ENCODE measurements at regions of chr12 and their contacts with region 1.

Region 1: DNA sequence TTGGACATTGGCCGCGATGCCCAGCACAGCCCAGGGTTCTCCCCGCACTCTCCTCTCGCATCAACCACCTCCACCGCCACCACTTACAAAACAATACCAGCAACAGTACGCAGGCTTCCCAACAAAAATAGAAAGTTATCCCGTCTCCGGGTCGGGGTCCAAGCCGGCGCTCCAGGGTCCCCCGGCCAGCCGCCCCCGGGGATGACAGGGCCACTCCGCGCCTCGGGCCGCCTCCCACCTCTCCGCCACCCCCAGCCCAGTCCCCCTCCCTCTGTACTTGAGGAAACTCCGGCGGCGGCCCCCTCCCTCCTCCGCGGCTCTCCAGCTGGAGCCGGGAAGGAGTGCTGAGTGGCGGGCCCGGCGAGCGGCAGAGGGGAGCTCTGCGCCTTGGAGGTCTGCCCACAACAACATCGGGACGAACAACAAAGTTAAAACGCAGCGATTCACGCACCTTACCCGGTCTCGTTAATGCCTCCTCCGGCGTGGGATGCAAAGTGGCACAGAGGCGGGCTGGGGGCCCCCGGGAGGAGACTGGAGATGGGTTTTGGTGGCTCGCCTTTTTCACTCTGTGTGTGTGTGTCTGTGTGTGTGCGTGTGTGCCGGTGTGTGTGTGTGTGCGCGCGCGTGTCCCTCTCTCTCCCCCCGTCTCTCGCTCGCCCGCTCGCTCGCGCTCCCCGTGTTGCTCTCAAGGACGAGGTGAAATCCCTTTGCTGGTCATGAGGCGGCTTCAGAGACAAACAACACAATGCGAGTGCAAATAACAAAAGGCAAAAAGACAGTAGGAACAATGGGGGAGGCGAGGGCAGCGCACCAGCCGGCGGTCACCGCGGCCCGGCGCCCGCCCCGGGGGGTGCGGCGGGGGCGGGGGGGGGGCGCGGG is 386.8 kb downstream of the BCAT1 start:
- DNase-seq: peak; percentile 84
- H3K4me3 ChIP-seq: peak overlapping the region; percentile 52 to 82 (median 78)
- H3K27ac ChIP-seq: peak overlapping the region; percentile 79 to 85 (median 82)
- H3K4me1 ChIP-seq: peaks cover 0 to 30% (median 21%) of the 10 kb centered on the region in 4 donors
- H3K27me3 ChIP-seq: no peaks in the 10 kb centered on the region
- CTCF ChIP-seq: no peak
- EP300 ChIP-seq: no peak
- POLR2A ChIP-seq: no peak

Region 2: GRCh38 chr12:24414480-24414879 is 147.6 kb before region 1 on chr12:
- intact Hi-C with region 1: no loop called
- DNase-seq: no peak
- H3K4me3 ChIP-seq: no peak overlapping the region
- H3K27ac ChIP-seq: no peak overlapping the region
- H3K4me1 ChIP-seq: no peaks in the 10 kb centered on the region
- H3K27me3 ChIP-seq: no peaks in the 10 kb centered on the region
- CTCF ChIP-seq: no peak
- EP300 ChIP-seq: no peak
- POLR2A ChIP-seq: no peak

Region 3: GRCh38 chr12:24499151-24500146 is 62.7 kb before region 1 on chr12:
- intact Hi-C with region 1: loop called (anchors 5 kb)
- DNase-seq: no peak
- H3K4me3 ChIP-seq: no peak overlapping the region
- H3K27ac ChIP-seq: peak overlapping the region; percentile 38 to 59 (median 41)
- H3K4me1 ChIP-seq: peaks cover 0 to 32% (median 14%) of the 10 kb centered on the region in 4 donors
- H3K27me3 ChIP-seq: no peaks in the 10 kb centered on the region
- CTCF ChIP-seq: no peak
- EP300 ChIP-seq: no peak
- POLR2A ChIP-seq: no peak

Measured in sigmoid colon (tissue), 7 donors.